Vagina (tissue), 2 donors: ENCODE measurements at regions of chr1 and their contacts with region 1.

Region 1: DNA sequence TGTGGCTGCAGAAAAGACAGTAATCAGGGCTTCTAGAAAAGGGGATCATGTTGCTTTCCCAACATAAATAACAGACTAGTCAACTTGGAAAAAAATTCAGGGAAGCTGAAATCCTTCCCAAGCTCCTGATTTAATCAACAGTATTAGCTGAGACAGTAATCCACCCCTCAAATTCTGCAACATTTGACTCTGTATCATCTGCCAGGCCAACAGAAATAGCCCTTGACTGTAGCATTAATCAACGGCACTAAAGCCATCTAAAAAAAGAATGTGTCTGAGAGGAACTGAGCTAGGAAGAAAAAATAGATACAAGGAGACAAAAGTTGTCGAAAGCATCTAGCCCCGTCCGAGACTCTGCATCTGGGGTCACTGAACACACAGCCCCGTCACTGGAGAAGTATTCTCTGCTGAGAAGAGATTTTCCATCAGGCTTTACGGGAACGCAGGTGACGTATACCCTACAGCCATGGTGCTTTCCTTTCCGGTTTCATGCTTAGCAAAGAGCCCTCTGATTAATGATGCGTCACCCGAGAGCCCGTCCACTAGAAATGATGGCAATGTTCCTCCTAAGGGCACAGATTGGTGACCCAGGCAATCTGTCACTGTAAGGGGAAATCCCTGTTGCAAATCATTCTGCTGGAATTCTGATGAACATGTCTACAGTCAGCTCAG is 42.1 kb upstream of the TP53BP2 start:
- DNase-seq: no peak
- H3K4me3 ChIP-seq: no peak overlapping the region
- H3K27ac ChIP-seq: no peak overlapping the region
- H3K4me1 ChIP-seq: no peaks in the 10 kb centered on the region
- H3K27me3 ChIP-seq: no peaks in the 10 kb centered on the region
- CTCF ChIP-seq: no peak
- POLR2A ChIP-seq: no peak

Region 2: DNA sequence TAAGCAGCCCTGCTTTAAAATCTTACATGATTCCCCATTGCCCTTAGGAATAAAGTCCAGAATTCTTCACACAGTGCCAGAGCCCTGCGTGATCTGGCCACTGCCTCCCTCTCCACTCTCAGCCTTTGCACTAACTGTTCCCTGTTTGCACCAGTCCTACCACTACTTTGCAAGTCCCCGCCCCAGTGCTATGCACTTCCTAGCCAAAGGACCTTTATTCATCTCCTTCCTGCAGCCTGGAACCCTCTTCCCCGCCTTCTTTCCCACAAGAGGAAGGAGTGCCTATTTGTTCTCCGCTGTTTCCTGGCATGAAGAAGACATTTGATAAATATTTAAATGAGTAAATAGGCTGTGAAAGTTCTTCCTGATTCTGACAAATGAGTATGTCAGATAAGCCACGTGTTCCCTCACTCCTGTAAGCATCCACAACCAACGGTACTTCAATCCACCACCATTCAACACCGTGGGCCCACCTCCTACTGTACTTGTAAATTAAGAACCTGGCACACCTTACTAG is 246.3 kb before region 1 on chr1:
- intact Hi-C with region 1: loop called (anchors 5 kb)
- DNase-seq: no peak
- H3K4me3 ChIP-seq: no peak overlapping the region
- H3K27ac ChIP-seq: no peak overlapping the region
- H3K4me1 ChIP-seq: no peaks in the 10 kb centered on the region
- H3K27me3 ChIP-seq: no peaks in the 10 kb centered on the region
- CTCF ChIP-seq: no peak
- POLR2A ChIP-seq: no peak